ENCODE measurements at regions of chr21 and their contacts with region 1.

Region 1: GRCh38 chr21:14675774-14676530 is 129.8 kb upstream of the SAMSN1 start:
- DNase-seq: peak; percentile 45 to 70 (median 62)
- H3K4me3 ChIP-seq: peak overlapping the region in 1 of 2 donors; percentile 37
- H3K4me3 Mint-ChIP-seq: peak overlapping the region; percentile 8 to 79 (median 54)
- H3K27ac ChIP-seq: peak overlapping the region; percentile 48
- H3K27ac Mint-ChIP-seq: peak overlapping the region; percentile 87 to 98 (median 94)
- H3K4me1 ChIP-seq: peaks cover 34% of the 10 kb centered on the region
- H3K4me1 Mint-ChIP-seq: peaks cover 33 to 45% (median 34%) of the 10 kb centered on the region in 4 donors
- H3K27me3 ChIP-seq: no peaks in the 10 kb centered on the region
- H3K27me3 Mint-ChIP-seq: no peaks in the 10 kb centered on the region

Region 2: GRCh38 chr21:14482165-14482564 is 193.8 kb before region 1 on chr21:
- CTCF ChIA-PET with region 1: interaction called, 3 read pairs
- POLR2A ChIA-PET with region 1: interaction called, 3 read pairs
- intact Hi-C with region 1: loop called (anchors 5 kb)
- DNase-seq: peak; percentile 54 to 71 (median 57)
- H3K4me3 ChIP-seq: peak overlapping the region in 1 of 2 donors; percentile 13
- H3K4me3 Mint-ChIP-seq: peak overlapping the region; percentile 25 to 81 (median 56)
- H3K27ac ChIP-seq: no peak overlapping the region
- H3K27ac Mint-ChIP-seq: peak overlapping the region; percentile 11 to 91 (median 82)
- H3K4me1 ChIP-seq: peaks cover 24% of the 10 kb centered on the region
- H3K4me1 Mint-ChIP-seq: peaks cover 20 to 29% (median 23%) of the 10 kb centered on the region in 4 donors
- H3K27me3 ChIP-seq: no peaks in the 10 kb centered on the region
- H3K27me3 Mint-ChIP-seq: no peaks in the 10 kb centered on the region

Region 3: DNA sequence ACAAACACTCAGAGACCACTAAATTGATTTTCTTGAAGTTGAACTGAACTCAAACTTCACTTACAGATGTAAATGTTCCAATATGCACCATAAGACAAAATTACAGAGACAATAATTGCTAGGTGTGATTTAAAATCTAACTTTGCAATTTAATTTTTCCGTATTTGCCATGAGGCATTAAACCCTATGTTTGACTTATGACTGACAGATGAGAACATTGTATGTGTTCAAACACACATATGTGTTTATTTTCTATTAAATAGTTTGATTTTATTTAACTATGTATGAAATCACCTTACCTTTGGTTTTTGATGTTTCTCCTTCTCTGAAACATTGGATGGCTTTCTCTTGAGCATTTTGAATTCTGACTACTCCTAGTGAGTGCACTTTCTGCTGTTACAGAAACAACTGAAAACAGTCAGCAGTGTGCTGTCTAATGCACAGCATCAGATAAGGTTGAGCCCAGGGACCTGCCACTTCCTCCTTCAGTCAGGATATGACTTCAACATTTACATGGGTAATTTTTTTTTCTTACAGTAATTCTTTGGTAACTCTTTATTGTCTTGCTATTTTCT is 130.0 kb before region 1 on chr21 and contains the start of gene SAMSN1:
- CTCF ChIA-PET with region 1: interaction called, 6 read pairs
- POLR2A ChIA-PET with region 1: interaction called, 20 read pairs
- intact Hi-C with region 1: loop called (anchors 5 kb)
- DNase-seq: peak; percentile 79 to 90 (median 85)
- H3K4me3 ChIP-seq: peak within 1 kb of the TSS; percentile 48 to 98
- H3K4me3 Mint-ChIP-seq: peak within 1 kb of the TSS; percentile 89 to 99 (median 94)
- H3K27ac ChIP-seq: peak within 1 kb of the TSS; percentile 78
- H3K27ac Mint-ChIP-seq: peak within 1 kb of the TSS; percentile 87 to 97 (median 95)
- H3K4me1 ChIP-seq: peaks cover 78% of the 10 kb centered on the region
- H3K4me1 Mint-ChIP-seq: peaks cover 42 to 79% (median 61%) of the 10 kb centered on the region in 4 donors
- H3K27me3 ChIP-seq: no peaks in the 10 kb centered on the region
- H3K27me3 Mint-ChIP-seq: no peaks in the 10 kb centered on the region
- total RNA-seq, gene SAMSN1: 58.0 to 59.5 TPM

Region 4: DNA sequence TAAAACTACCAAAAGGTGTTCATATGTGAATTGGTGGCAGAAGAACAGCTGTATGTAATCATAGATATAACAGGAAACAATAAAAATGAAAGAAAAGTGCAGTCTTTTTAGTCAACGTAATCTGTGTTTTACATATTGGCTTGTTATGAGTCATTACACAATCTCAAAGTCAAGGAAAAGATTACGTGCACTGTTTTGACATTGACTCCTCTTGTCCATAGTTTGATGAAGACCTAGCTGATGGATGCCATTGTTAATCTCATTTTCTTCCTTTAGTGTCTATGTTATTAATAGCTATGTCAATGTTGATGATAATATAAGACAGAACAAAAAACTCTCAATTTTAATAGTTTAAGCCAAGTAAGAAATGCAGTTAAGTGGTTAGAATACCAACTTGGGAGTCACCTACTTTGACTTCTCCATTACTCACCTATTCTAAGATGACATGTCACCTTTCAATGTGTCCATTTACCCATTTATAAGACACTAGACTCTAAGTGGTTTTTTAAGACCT is 45.3 kb before region 1 on chr21:
- CTCF ChIA-PET with region 1: no interaction called
- POLR2A ChIA-PET with region 1: interaction called, 6 read pairs
- intact Hi-C with region 1: loop called (anchors 5 kb)
- DNase-seq: peak in 4 of 5 donors; percentile 23 to 41 (median 28)
- H3K4me3 ChIP-seq: no peak overlapping the region
- H3K4me3 Mint-ChIP-seq: peak overlapping the region; percentile 64 to 84 (median 78)
- H3K27ac ChIP-seq: no peak overlapping the region
- H3K27ac Mint-ChIP-seq: peak overlapping the region; percentile 58 to 92 (median 77)
- H3K4me1 ChIP-seq: peaks cover 21% of the 10 kb centered on the region
- H3K4me1 Mint-ChIP-seq: peaks cover 18 to 25% (median 20%) of the 10 kb centered on the region in 4 donors
- H3K27me3 ChIP-seq: no peaks in the 10 kb centered on the region
- H3K27me3 Mint-ChIP-seq: no peaks in the 10 kb centered on the region

Region 5: DNA sequence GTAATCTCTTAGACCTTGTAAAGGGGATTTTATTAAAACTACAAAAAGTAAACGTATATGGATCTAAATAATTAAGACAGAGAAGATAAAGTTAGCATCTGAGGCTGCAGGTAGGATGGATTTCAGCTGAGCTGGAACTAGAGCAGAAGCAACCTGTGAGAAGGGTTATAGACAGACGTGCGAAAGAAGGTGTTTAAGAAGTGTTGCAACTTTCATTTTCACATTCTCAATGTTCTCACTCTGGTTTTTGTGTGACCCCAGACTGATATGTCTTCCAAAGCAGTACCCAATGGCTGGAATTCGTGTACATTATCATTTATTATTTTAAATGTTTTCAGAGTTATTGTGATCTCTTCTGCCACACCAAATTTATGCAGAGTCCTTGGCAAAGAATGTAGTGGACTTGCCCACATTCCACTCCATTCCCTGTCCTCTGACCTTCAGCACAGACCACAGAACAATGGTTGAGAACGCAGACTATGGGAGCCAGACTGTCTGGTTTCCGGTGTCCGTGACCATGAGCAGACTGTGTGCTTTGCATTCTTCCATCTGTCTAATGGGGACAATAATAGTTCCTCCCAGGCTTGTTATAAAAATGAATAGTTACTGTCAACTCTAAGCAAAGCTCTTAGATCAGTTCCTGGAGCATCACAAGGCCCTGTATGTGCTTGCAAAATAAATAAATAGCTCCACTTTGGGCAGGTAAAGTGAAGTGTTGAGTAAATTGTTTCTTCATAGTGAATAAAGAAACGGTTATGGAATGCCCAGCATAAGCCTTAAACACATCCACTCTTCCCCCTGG is 10.7 kb after region 1 on chr21:
- CTCF ChIA-PET with region 1: interaction called, 3 read pairs
- POLR2A ChIA-PET with region 1: interaction called, 13 read pairs
- intact Hi-C with region 1: no loop called
- DNase-seq: peak in 1 of 5 donors; percentile 9
- H3K4me3 ChIP-seq: no peak overlapping the region
- H3K4me3 Mint-ChIP-seq: peak overlapping the region; percentile 3 to 76 (median 68)
- H3K27ac ChIP-seq: no peak overlapping the region
- H3K27ac Mint-ChIP-seq: peak overlapping the region; percentile 12 to 85 (median 46)
- H3K4me1 ChIP-seq: peaks cover 17% of the 10 kb centered on the region
- H3K4me1 Mint-ChIP-seq: peaks cover 11 to 33% (median 28%) of the 10 kb centered on the region in 4 donors
- H3K27me3 ChIP-seq: no peaks in the 10 kb centered on the region
- H3K27me3 Mint-ChIP-seq: no peaks in the 10 kb centered on the region

Region 6: DNA sequence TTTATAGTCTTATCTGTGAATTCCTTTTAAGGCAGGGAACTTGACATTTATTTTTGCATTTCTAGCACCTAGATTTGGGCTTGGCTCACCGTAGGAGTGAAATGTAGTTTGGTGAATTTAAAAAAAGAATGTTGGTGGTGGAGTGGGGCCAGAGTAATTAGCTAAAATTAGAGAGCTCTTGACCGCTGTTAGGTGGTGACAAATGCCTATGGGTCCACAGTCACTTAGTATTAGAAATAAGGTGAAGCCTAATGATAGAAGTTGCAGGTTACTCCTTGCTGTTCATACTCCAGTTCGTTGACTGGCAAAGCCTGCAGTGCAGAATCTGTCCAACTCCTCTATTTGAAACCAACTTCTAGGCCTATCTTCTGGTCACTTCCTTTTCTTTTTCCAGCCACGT is 707.6 kb after region 1 on chr21:
- CTCF ChIA-PET with region 1: no interaction called
- POLR2A ChIA-PET with region 1: no interaction called
- intact Hi-C with region 1: no loop called
- DNase-seq: no peak
- H3K4me3 ChIP-seq: no peak overlapping the region
- H3K4me3 Mint-ChIP-seq: no peak overlapping the region
- H3K27ac ChIP-seq: no peak overlapping the region
- H3K27ac Mint-ChIP-seq: no peak overlapping the region
- H3K4me1 ChIP-seq: no peaks in the 10 kb centered on the region
- H3K4me1 Mint-ChIP-seq: peaks cover 0 to 1% (median 0%) of the 10 kb centered on the region in 4 donors
- H3K27me3 ChIP-seq: no peaks in the 10 kb centered on the region
- H3K27me3 Mint-ChIP-seq: peaks cover 0 to 3% of the 10 kb centered on the region in 2 donors

Measured in CD4-positive, alpha-beta memory T cell (primary cell).